Naive thymus-derived CD8-positive, alpha-beta T cell (primary cell): ENCODE measurements at regions of chr20 and their contacts with region 1.

Region 1: DNA sequence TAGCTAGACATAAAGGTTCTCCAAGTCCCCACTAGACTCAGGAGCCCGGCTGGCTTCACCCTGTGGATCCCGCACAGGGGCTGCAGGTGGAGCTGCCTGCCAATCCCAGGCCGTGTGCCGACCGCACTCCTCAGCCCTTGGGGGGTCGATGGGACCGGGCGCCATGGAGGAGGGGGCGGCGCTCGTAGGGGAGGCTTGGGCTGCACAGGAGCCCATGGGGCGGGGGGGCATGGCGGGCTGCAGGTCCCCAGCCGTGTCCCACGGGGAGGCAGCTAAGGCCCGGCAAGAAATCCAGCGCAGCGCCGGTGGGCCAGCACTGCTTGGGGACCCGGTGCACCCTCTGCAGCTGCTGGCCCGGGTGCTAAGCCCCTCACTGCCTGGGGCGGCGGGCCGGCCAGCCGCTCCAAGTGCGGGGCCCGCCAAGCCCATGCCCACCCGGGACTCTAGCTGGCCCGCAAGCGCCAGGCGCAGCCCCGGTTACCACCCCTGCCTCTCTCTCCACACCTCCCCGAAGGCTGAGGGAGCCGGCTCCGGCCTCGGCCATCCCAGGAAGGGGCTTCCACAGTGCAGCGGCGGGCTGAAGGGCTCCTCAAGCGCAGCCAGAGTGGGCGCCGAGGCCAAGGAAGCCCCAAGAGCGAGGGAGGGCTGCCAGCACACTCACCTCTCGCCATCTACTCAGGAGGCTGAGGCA is 26.5 kb upstream of the ID1 start:
- DNase-seq: no peak
- ATAC-seq: no peak
- H3K4me3 Mint-ChIP-seq: no peak overlapping the region
- H3K27ac Mint-ChIP-seq: no peak overlapping the region
- H3K4me1 Mint-ChIP-seq: peaks cover 2 to 24% (median 11%) of the 10 kb centered on the region in 4 donors
- H3K27me3 Mint-ChIP-seq: no peaks in the 10 kb centered on the region

Region 2: DNA sequence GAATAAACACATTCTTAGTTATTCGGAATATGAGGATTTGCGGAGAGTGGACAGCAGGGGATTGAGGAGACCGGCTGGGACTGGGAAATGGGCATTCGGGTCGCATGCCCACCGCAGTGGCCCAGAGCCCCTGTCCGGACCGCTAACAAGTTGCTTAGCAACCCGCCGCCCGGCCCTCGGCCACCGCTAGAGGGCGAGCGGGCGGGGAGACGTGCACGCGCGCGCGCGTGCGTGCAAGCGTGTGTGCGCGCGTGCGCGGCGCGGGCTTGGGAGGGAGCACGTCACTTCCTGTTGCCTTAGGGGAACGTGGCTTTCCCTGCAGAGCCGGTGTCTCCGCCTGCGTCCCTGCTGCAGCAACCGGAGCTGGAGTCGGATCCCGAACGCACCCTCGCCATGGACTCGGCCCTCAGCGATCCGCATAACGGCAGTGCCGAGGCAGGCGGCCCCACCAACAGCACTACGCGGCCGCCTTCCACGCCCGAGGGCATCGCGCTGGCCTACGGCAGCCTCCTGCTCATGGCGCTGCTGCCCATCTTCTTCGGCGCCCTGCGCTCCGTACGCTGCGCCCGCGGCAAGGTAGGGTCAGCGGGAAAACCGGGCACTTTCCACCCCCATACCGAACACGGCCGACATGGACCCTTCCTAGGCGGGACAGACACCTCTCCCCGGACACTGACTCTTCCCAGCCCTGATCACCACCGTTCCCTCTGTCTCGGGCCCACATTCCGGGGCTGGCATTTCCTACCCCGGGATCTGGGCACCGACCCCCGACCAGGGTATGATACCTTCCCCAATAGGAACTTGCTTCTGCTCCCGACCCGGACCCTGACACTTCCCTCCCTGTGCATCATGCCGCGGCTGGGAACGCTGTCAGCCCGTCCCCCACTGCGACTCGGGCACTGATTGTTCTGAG is 64.2 kb before region 1 on chr20 and contains the start of gene HM13:
- POLR2A ChIA-PET with region 1: no interaction called
- DNase-seq: peak; percentile 80 to 93 (median 88)
- ATAC-seq: peak; percentile 88
- H3K4me3 Mint-ChIP-seq: peak within 1 kb of the TSS in 2 of 10 donors; percentile 62 to 75
- H3K27ac Mint-ChIP-seq: peak within 1 kb of the TSS in 8 of 10 donors; percentile 69 to 95 (median 86)
- H3K4me1 Mint-ChIP-seq: peaks cover 2 to 11% (median 9%) of the 10 kb centered on the region in 4 donors
- H3K27me3 Mint-ChIP-seq: peaks cover 0 to 2% (median 0%) of the 10 kb centered on the region in 5 donors
- polyA plus RNA-seq, gene HM13: 96.5 to 115 (median 113) TPM

Region 3: GRCh38 chr20:31605031-31605901 is 26.7 kb after region 1 on chr20 and contains the start of gene ID1:
- POLR2A ChIA-PET with region 1: interaction called, 25 read pairs
- DNase-seq: peak; percentile 79 to 93 (median 86)
- ATAC-seq: peak; percentile 93 to 94
- H3K4me3 Mint-ChIP-seq: peak within 1 kb of the TSS; percentile 91 to 96 (median 93)
- H3K27ac Mint-ChIP-seq: peak within 1 kb of the TSS; percentile 43 to 93 (median 84)
- H3K4me1 Mint-ChIP-seq: peaks cover 15 to 34% (median 23%) of the 10 kb centered on the region in 4 donors
- H3K27me3 Mint-ChIP-seq: peaks cover 9 to 55% (median 23%) of the 10 kb centered on the region in 5 donors
- polyA plus RNA-seq, gene ID1: 0.29 to 0.87 (median 0.51) TPM